CD14-positive monocyte (primary cell): ENCODE measurements at regions of chr6 and their contacts with region 1.

Region 1: GRCh38 chr6:149154261-149154821 is 163.2 kb upstream of the TAB2 start:
- DNase-seq: no peak
- H3K4me3 ChIP-seq: no peak overlapping the region
- H3K4me3 Mint-ChIP-seq: no peak overlapping the region
- H3K27ac ChIP-seq: no peak overlapping the region
- H3K27ac Mint-ChIP-seq: peak overlapping the region in 3 of 7 donors; percentile 20 to 27 (median 24)
- H3K4me1 ChIP-seq: peaks cover 18 to 20% of the 10 kb centered on the region in 2 donors
- H3K4me1 Mint-ChIP-seq: peaks cover 26% of the 10 kb centered on the region
- H3K27me3 ChIP-seq: no peaks in the 10 kb centered on the region
- H3K27me3 Mint-ChIP-seq: peaks cover 0 to 1% (median 0%) of the 10 kb centered on the region in 3 donors
- CTCF ChIP-seq: no peak

Region 2: DNA sequence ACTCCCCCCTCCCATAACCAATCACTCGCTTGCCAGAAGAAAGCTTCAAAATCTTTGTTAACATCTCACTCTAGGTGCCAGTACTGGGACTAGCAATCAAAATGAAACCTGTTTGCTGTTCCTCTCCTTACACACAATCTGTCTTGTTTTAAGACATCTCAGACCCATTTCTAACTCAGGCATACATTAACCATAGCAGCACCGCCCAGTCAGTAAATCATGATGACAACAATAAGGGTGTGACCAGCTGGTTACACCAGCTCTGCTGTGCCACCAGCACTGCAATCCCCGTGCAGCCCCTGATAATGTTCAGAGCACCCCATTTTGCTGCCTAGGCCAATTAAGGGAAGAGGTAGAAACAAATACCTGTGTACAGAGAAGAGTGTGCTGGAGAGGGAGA is 22.0 kb before region 1 on chr6:
- intact Hi-C with region 1: loop called in 1 of 2 experiments (anchors 2 kb)
- DNase-seq: no peak
- H3K4me3 ChIP-seq: no peak overlapping the region
- H3K4me3 Mint-ChIP-seq: no peak overlapping the region
- H3K27ac ChIP-seq: no peak overlapping the region
- H3K27ac Mint-ChIP-seq: no peak overlapping the region
- H3K4me1 ChIP-seq: peaks cover 14 to 24% of the 10 kb centered on the region in 2 donors
- H3K4me1 Mint-ChIP-seq: peaks cover 28% of the 10 kb centered on the region
- H3K27me3 ChIP-seq: no peaks in the 10 kb centered on the region
- H3K27me3 Mint-ChIP-seq: peaks cover 0 to 4% (median 3%) of the 10 kb centered on the region in 3 donors
- CTCF ChIP-seq: no peak

Region 3: DNA sequence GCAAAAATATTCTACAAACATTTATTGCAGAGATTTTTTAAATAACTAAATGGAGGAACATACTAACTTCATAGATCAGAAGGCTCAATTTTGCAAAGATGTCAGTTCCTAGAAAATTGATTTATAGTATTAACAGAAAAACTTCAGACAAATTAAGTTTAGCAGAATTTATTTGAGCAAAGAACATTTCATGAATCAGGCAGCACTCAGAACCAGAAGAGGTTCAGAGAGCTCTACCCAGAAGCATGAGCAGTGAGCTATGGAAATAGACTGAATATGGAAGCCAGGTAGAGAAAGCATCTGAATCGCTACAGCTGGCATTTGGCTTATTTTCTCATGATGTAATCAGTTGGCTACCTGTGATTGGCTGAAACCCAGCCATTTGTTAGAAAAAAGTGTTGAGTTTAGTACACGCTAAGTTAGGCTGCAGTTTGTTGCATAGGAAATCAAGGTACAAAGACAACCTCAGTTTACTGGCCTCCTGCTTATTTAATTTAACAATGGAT is 11.4 kb before region 1 on chr6:
- intact Hi-C with region 1: no loop called
- DNase-seq: no peak
- H3K4me3 ChIP-seq: no peak overlapping the region
- H3K4me3 Mint-ChIP-seq: no peak overlapping the region
- H3K27ac ChIP-seq: no peak overlapping the region
- H3K27ac Mint-ChIP-seq: no peak overlapping the region
- H3K4me1 ChIP-seq: peaks cover 13 to 16% of the 10 kb centered on the region in 2 donors
- H3K4me1 Mint-ChIP-seq: peaks cover 26% of the 10 kb centered on the region
- H3K27me3 ChIP-seq: no peaks in the 10 kb centered on the region
- H3K27me3 Mint-ChIP-seq: peaks cover 0 to 3% (median 0%) of the 10 kb centered on the region in 3 donors
- CTCF ChIP-seq: no peak